ENCODE measurements at regions of chr1 and their contacts with region 1.

Region 1: GRCh38 chr1:57188168-57188567 is 222.4 kb upstream of the C8B start:
- DNase-seq: no peak
- H3K4me3 ChIP-seq: no peak overlapping the region
- H3K27ac ChIP-seq: no peak overlapping the region
- H3K4me1 ChIP-seq: no peaks in the 10 kb centered on the region
- H3K27me3 ChIP-seq: no peaks in the 10 kb centered on the region
- CTCF ChIP-seq: no peak
- POLR2A ChIP-seq: no peak

Region 2: DNA sequence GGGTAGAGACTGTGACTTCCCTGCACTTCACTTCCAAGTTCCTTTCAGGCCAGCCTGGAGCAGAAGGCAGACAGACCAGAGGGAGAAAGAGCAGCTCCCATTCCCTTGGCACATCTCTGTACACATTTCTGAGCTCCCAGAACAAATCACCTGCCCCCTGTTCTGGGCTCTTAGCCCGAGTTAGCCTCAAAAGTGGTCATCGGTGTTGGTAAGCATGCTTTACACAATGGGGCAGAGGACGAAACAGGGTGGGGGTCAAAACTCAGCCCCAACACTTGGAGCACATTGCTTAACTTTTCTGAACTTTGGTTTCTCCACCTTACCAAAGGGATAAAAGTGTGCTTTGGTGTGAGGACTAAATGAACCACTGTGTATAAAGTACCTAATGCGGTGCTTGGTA is 136.9 kb after region 1 on chr1:
- intact Hi-C with region 1: no loop called
- DNase-seq: no peak
- H3K4me3 ChIP-seq: no peak overlapping the region
- H3K27ac ChIP-seq: no peak overlapping the region
- H3K4me1 ChIP-seq: no peaks in the 10 kb centered on the region
- H3K27me3 ChIP-seq: no peaks in the 10 kb centered on the region
- CTCF ChIP-seq: no peak
- POLR2A ChIP-seq: no peak

Region 3: DNA sequence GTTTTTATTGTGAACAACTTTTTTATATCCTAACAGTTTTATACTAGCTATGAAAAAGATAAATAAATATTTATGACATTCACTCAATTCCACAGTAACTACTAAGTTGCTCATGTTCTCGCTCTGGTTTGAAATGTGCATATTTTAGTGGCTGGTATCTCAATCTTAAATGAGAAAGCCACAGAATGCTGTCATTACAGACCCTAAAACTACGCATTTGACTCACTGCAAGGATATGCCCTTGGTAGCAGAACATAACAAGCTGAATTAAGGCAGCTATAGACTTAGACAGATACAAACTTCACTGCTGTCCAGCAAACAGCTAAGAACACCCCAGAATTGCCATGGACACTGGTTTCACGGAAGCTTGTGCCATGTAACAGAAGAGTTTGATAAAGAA is 216.7 kb after region 1 on chr1:
- intact Hi-C with region 1: loop called (anchors 10 kb)
- DNase-seq: no peak
- H3K4me3 ChIP-seq: no peak overlapping the region
- H3K27ac ChIP-seq: no peak overlapping the region
- H3K4me1 ChIP-seq: no peaks in the 10 kb centered on the region
- H3K27me3 ChIP-seq: no peaks in the 10 kb centered on the region
- CTCF ChIP-seq: no peak
- POLR2A ChIP-seq: no peak